Common myeloid progenitor, CD34-positive (primary cell): ENCODE measurements at regions of chr20 and their contacts with region 1.

Region 1: DNA sequence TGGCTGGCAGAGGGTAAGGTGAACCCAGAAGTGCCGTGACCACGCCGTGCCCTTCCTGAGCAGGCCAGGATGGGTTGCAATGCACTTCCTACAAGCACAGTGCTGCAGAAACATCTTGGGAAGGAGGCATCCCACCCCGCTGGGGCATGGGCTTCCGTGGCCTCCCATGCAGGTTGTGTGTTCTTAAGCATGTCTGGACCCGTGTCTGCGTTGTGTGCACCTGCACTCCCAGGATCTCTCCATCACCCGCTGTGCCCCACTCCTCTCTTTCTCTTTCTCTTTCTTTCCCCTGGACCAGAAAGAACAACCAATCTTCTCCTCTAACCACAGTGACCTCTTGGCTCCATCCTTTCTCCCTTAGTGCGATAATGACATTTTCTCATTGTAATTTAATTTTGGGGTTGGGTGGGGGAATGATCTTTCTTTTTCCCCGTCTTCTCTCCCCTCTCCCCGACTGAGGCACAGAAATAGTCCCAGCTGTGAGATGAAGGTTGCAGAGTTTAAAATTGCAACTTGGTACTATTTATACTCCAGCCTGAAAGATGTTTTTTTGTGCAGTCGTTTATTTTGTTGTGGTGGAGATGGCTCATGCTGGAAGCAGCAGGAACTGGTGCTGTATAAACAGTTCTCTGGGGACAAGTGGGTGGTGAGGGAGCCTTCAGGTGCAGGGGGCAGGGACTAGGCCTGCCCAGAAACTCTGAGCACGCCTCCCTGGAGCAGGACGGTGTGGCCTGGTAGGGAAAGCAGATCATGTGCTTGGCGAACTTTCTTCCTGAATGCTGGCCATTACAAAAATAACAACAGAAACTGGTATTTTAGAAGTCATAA is 20.5 kb downstream of the BCAS4 start:
- DNase-seq: peak in 2 of 3 donors; percentile 34 to 48
- H3K4me3 ChIP-seq: peak overlapping the region in 3 of 7 experiments; percentile 7 to 59 (median 22)
- H3K27ac ChIP-seq: peak overlapping the region in 1 of 2 experiments; percentile 38
- H3K4me1 ChIP-seq: peaks cover 0 to 45% (median 28%) of the 10 kb centered on the region in 4 experiments
- H3K27me3 ChIP-seq: no peaks in the 10 kb centered on the region

Region 2: GRCh38 chr20:50704980-50705379 is 110.4 kb before region 1 on chr20:
- CTCF ChIA-PET with region 1: no interaction called
- POLR2A ChIA-PET with region 1: no interaction called
- DNase-seq: no peak
- H3K4me3 ChIP-seq: no peak overlapping the region
- H3K27ac ChIP-seq: no peak overlapping the region
- H3K4me1 ChIP-seq: no peaks in the 10 kb centered on the region
- H3K27me3 ChIP-seq: no peaks in the 10 kb centered on the region

Region 3: DNA sequence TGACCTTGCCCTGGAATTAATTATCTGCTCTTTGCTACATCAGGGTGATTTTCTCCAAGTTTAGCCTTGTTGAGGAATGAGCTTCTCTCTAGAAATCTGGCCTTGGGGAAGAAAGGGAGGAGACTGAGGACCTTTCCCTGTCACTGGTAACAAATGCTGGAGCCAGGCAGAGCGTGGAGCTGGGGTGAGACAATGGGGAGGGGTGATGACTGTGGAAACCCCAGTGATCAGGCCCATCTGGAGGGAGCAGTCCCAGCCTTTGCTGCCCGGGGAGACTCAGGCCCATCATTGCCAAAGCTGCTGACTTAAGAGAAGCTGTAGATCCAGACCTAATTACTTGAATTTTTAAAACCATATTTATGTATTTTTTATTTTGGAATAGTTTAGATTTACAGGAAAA is 10.7 kb after region 1 on chr20:
- CTCF ChIA-PET with region 1: no interaction called
- POLR2A ChIA-PET with region 1: no interaction called
- DNase-seq: no peak
- H3K4me3 ChIP-seq: no peak overlapping the region
- H3K27ac ChIP-seq: no peak overlapping the region
- H3K4me1 ChIP-seq: peaks cover 0 to 10% (median 9%) of the 10 kb centered on the region in 4 experiments
- H3K27me3 ChIP-seq: no peaks in the 10 kb centered on the region

Region 4: GRCh38 chr20:50848341-50848808 is 33.0 kb after region 1 on chr20:
- CTCF ChIA-PET with region 1: interaction called, 11 read pairs
- POLR2A ChIA-PET with region 1: no interaction called
- DNase-seq: peak in 1 of 3 donors; percentile 25
- H3K4me3 ChIP-seq: no peak overlapping the region
- H3K27ac ChIP-seq: no peak overlapping the region
- H3K4me1 ChIP-seq: peaks cover 0 to 21% (median 12%) of the 10 kb centered on the region in 4 experiments
- H3K27me3 ChIP-seq: no peaks in the 10 kb centered on the region